Breast epithelium (tissue), 4 donors: ENCODE measurements at regions of chr16 and their contacts with region 1.

Region 1: GRCh38 chr16:25925421-25925820 is 233.7 kb downstream of the HS3ST4 start:
- DNase-seq: no peak
- H3K4me3 ChIP-seq: no peak overlapping the region
- H3K27ac ChIP-seq: no peak overlapping the region
- H3K4me1 ChIP-seq: no peaks in the 10 kb centered on the region
- H3K27me3 ChIP-seq: no peaks in the 10 kb centered on the region
- CTCF ChIP-seq: no peak
- POLR2A ChIP-seq: no peak

Region 2: GRCh38 chr16:24418666-24419065 is 1506.8 kb before region 1 on chr16:
- intact Hi-C with region 1: loop called (anchors 5 kb)
- DNase-seq: no peak
- H3K4me3 ChIP-seq: no peak overlapping the region
- H3K27ac ChIP-seq: no peak overlapping the region
- H3K4me1 ChIP-seq: no peaks in the 10 kb centered on the region
- H3K27me3 ChIP-seq: no peaks in the 10 kb centered on the region
- CTCF ChIP-seq: no peak
- POLR2A ChIP-seq: no peak

Region 3: GRCh38 chr16:25941800-25942499 is 16.5 kb after region 1 on chr16:
- intact Hi-C with region 1: no loop called
- DNase-seq: no peak
- H3K4me3 ChIP-seq: no peak overlapping the region
- H3K27ac ChIP-seq: no peak overlapping the region
- H3K4me1 ChIP-seq: no peaks in the 10 kb centered on the region
- H3K27me3 ChIP-seq: no peaks in the 10 kb centered on the region
- CTCF ChIP-seq: no peak
- POLR2A ChIP-seq: no peak

Region 4: GRCh38 chr16:26169473-26169872 is 244.1 kb after region 1 on chr16:
- intact Hi-C with region 1: no loop called
- DNase-seq: no peak
- H3K4me3 ChIP-seq: no peak overlapping the region
- H3K27ac ChIP-seq: no peak overlapping the region
- H3K4me1 ChIP-seq: no peaks in the 10 kb centered on the region
- H3K27me3 ChIP-seq: peaks cover 0 to 15% of the 10 kb centered on the region in 2 donors
- CTCF ChIP-seq: no peak
- POLR2A ChIP-seq: no peak

Region 5: GRCh38 chr16:26231647-26232046 is 306.2 kb after region 1 on chr16:
- intact Hi-C with region 1: no loop called
- DNase-seq: no peak
- H3K4me3 ChIP-seq: no peak overlapping the region
- H3K27ac ChIP-seq: no peak overlapping the region
- H3K4me1 ChIP-seq: no peaks in the 10 kb centered on the region
- H3K27me3 ChIP-seq: no peaks in the 10 kb centered on the region
- CTCF ChIP-seq: no peak
- POLR2A ChIP-seq: no peak